B cell (primary cell): ENCODE measurements at regions of chr5 and their contacts with region 1.

Region 1: GRCh38 chr5:56270568-56271392 is 37.6 kb upstream of the ANKRD55 start:
- DNase-seq: peak; percentile 85
- ATAC-seq: peak; percentile 99
- H3K4me3 ChIP-seq: peak overlapping the region in 4 of 5 experiments; percentile 1 to 24 (median 8)
- H3K4me3 Mint-ChIP-seq: peak overlapping the region; percentile 73
- H3K27ac ChIP-seq: peak overlapping the region; percentile 26 to 63
- H3K27ac Mint-ChIP-seq: peak overlapping the region; percentile 76
- H3K4me1 ChIP-seq: peaks cover 23 to 24% of the 10 kb centered on the region in 2 donors
- H3K4me1 Mint-ChIP-seq: peaks cover 19% of the 10 kb centered on the region
- H3K27me3 ChIP-seq: no peaks in the 10 kb centered on the region
- H3K27me3 Mint-ChIP-seq: no peaks in the 10 kb centered on the region
- CTCF ChIP-seq: peak; percentile 97

Region 2: GRCh38 chr5:55982957-55983381 is 287.8 kb before region 1 on chr5:
- CTCF ChIA-PET with region 1: interaction called, 4 read pairs
- POLR2A ChIA-PET with region 1: interaction called, 3 read pairs
- intact Hi-C with region 1: loop called (anchors 5 kb)
- DNase-seq: no peak
- ATAC-seq: no peak
- H3K4me3 ChIP-seq: no peak overlapping the region
- H3K4me3 Mint-ChIP-seq: no peak overlapping the region
- H3K27ac ChIP-seq: no peak overlapping the region
- H3K27ac Mint-ChIP-seq: no peak overlapping the region
- H3K4me1 ChIP-seq: no peaks in the 10 kb centered on the region
- H3K4me1 Mint-ChIP-seq: peaks cover 3% of the 10 kb centered on the region
- H3K27me3 ChIP-seq: no peaks in the 10 kb centered on the region
- H3K27me3 Mint-ChIP-seq: no peaks in the 10 kb centered on the region
- CTCF ChIP-seq: no peak

Region 3: DNA sequence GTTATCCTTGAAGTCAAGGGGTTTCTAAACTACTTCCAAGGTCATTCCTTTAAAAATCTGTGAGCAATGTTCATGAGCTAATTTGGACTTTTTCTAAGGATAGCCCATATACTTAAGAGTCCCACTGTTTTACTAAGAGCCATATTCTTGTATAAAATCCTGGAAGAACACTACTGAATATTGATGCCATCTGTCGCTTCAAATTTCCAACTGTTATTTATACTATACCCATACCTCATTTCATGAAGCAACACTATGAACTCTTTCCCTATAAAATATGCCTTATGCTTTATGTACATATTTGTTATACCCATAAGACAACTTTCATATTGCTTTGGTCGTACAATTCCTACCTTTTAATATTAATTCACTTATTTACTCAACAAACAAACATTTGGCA is 25.3 kb before region 1 on chr5:
- CTCF ChIA-PET with region 1: no interaction called
- POLR2A ChIA-PET with region 1: no interaction called
- intact Hi-C with region 1: no loop called
- DNase-seq: no peak
- ATAC-seq: no peak
- H3K4me3 ChIP-seq: no peak overlapping the region
- H3K4me3 Mint-ChIP-seq: no peak overlapping the region
- H3K27ac ChIP-seq: no peak overlapping the region
- H3K27ac Mint-ChIP-seq: no peak overlapping the region
- H3K4me1 ChIP-seq: no peaks in the 10 kb centered on the region
- H3K4me1 Mint-ChIP-seq: no peaks in the 10 kb centered on the region
- H3K27me3 ChIP-seq: peaks cover 0 to 6% (median 2%) of the 10 kb centered on the region in 4 experiments
- H3K27me3 Mint-ChIP-seq: peaks cover 7% of the 10 kb centered on the region
- CTCF ChIP-seq: no peak

Region 4: DNA sequence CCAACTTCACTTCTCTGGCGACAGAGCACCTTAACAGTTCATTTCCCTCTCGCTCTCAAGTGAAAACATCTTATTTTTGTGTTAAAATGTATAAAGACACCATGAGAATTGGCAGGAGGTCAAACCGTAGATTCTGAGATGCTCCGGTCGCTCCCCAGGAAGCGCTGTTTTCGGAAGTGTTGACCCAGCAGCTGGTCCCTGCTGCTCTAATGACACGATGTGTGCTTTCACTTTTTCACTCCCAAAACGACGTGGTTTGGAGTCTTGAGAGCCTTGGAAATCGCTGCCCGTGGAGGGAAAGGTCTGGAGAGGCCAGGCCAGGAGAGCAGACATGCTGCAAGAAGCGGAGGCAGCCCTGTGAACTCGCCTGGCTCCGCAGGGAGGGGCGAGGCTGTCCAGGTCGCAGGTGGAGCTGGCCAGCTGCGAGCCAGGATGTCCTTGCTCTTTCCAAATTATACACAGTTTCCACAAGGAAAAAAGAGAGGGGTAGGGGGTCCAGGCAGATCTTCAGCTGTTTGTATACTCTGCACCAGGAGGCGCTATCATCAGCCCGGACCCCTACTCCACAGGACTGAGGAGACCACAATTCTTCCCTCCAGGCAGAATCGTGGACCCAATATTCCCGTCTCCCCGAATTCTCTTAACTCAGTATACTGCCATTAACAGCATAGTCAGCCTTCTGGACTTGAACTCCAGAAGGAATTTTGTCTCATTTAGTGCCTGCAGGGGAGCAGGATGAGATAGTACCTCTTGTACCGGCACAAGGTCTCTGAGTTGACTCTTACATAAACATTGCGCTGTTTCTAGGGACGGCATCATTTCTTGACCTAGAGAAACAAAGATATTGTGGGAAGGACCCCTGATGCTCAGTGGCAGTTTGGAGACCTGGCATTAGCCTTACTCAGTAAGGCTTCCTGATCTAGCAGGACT is 210.9 kb after region 1 on chr5:
- CTCF ChIA-PET with region 1: interaction called, 37 read pairs
- POLR2A ChIA-PET with region 1: interaction called, 11 read pairs
- intact Hi-C with region 1: loop called (anchors 1 kb)
- DNase-seq: peak; percentile 72
- ATAC-seq: peak; percentile 18
- H3K4me3 ChIP-seq: peak overlapping the region; percentile 56 to 76 (median 65)
- H3K4me3 Mint-ChIP-seq: peak overlapping the region; percentile 95
- H3K27ac ChIP-seq: peak overlapping the region; percentile 93 to 96
- H3K27ac Mint-ChIP-seq: peak overlapping the region; percentile 97
- H3K4me1 ChIP-seq: peaks cover 42 to 57% of the 10 kb centered on the region in 2 donors
- H3K4me1 Mint-ChIP-seq: peaks cover 41% of the 10 kb centered on the region
- H3K27me3 ChIP-seq: no peaks in the 10 kb centered on the region
- H3K27me3 Mint-ChIP-seq: no peaks in the 10 kb centered on the region
- CTCF ChIP-seq: peak; percentile 52

Region 5: GRCh38 chr5:56670118-56670483 is 399.3 kb after region 1 on chr5:
- CTCF ChIA-PET with region 1: interaction called, 28 read pairs
- POLR2A ChIA-PET with region 1: no interaction called
- intact Hi-C with region 1: loop called (anchors 1 kb)
- DNase-seq: peak; percentile 95
- ATAC-seq: no peak
- H3K4me3 ChIP-seq: no peak overlapping the region
- H3K4me3 Mint-ChIP-seq: peak overlapping the region; percentile 75
- H3K27ac ChIP-seq: peak overlapping the region; percentile 97 to 98
- H3K27ac Mint-ChIP-seq: peak overlapping the region; percentile 97
- H3K4me1 ChIP-seq: peaks cover 58% of the 10 kb centered on the region in 2 donors
- H3K4me1 Mint-ChIP-seq: peaks cover 74% of the 10 kb centered on the region
- H3K27me3 ChIP-seq: no peaks in the 10 kb centered on the region
- H3K27me3 Mint-ChIP-seq: no peaks in the 10 kb centered on the region
- CTCF ChIP-seq: no peak

Region 6: DNA sequence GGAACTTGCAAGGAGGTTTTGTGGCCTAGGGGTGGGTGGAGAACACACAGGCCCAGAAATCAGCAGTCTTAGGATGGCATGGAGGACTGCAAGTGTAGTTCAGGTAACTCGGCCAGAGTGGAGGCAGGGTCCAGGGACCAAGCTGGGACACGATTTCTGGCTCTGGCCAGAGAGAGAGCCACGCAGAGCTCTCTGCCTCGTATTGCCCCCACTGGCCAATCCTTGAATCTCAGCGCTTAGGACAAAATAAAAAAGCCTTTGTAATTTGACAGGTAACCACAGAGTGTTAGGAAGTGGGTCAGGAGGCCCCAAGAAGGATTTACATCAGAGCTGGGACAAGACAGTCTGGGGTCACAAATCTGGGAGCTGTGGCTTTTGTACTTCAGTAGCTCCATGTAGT is 556.3 kb after region 1 on chr5:
- CTCF ChIA-PET with region 1: interaction called, 361 read pairs
- POLR2A ChIA-PET with region 1: no interaction called
- intact Hi-C with region 1: no loop called
- DNase-seq: peak; percentile 51
- ATAC-seq: no peak
- H3K4me3 ChIP-seq: no peak overlapping the region
- H3K4me3 Mint-ChIP-seq: peak overlapping the region; percentile 63
- H3K27ac ChIP-seq: peak overlapping the region; percentile 15 to 85
- H3K27ac Mint-ChIP-seq: peak overlapping the region; percentile 82
- H3K4me1 ChIP-seq: peaks cover 83 to 96% of the 10 kb centered on the region in 2 donors
- H3K4me1 Mint-ChIP-seq: peaks cover 89% of the 10 kb centered on the region
- H3K27me3 ChIP-seq: no peaks in the 10 kb centered on the region
- H3K27me3 Mint-ChIP-seq: no peaks in the 10 kb centered on the region
- CTCF ChIP-seq: peak; percentile 44

Region 7: GRCh38 chr5:56876327-56876726 is 605.5 kb after region 1 on chr5:
- CTCF ChIA-PET with region 1: interaction called, 17 read pairs
- POLR2A ChIA-PET with region 1: no interaction called
- intact Hi-C with region 1: no loop called
- DNase-seq: no peak
- ATAC-seq: no peak
- H3K4me3 ChIP-seq: no peak overlapping the region
- H3K4me3 Mint-ChIP-seq: no peak overlapping the region
- H3K27ac ChIP-seq: peak overlapping the region in 1 of 2 donors; percentile 39
- H3K27ac Mint-ChIP-seq: no peak overlapping the region
- H3K4me1 ChIP-seq: peaks cover 10 to 20% of the 10 kb centered on the region in 2 donors
- H3K4me1 Mint-ChIP-seq: peaks cover 25% of the 10 kb centered on the region
- H3K27me3 ChIP-seq: no peaks in the 10 kb centered on the region
- H3K27me3 Mint-ChIP-seq: no peaks in the 10 kb centered on the region
- CTCF ChIP-seq: no peak

Region 8: DNA sequence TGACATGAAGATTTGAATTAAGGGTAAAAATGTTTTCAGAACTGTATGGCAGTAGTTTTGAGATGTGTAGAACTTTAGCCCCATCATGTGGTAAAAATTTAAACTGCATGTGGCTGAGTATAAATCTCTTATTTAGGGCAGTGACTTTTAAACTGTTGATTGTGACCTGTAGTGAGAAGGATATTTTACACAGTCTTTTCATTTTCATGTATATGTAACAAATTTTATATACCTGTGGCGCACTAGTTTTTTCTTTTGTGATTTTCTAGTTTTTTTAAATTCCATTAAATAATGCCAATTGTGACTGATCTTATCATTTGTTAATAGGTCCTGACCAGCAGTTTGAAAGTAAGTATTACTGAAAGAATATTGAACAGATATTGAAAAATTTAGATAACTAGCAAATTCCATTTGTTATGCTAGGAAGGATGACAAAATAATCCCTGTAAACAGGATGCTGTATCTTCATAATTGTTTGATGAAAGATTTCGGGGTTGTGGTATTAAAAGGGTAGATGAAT is 950.3 kb after region 1 on chr5:
- CTCF ChIA-PET with region 1: interaction called, 11 read pairs
- POLR2A ChIA-PET with region 1: no interaction called
- intact Hi-C with region 1: loop called (anchors 2 kb)
- DNase-seq: peak; percentile 82
- ATAC-seq: peak; percentile 65
- H3K4me3 ChIP-seq: no peak overlapping the region
- H3K4me3 Mint-ChIP-seq: peak overlapping the region; percentile 17
- H3K27ac ChIP-seq: peak overlapping the region in 1 of 2 donors; percentile 75
- H3K27ac Mint-ChIP-seq: peak overlapping the region; percentile 21
- H3K4me1 ChIP-seq: peaks cover 3 to 4% of the 10 kb centered on the region in 2 donors
- H3K4me1 Mint-ChIP-seq: peaks cover 33% of the 10 kb centered on the region
- H3K27me3 ChIP-seq: no peaks in the 10 kb centered on the region
- H3K27me3 Mint-ChIP-seq: no peaks in the 10 kb centered on the region
- CTCF ChIP-seq: peak; percentile 96